ENCODE measurements at regions of chr6 and their contacts with region 1.

Region 1: DNA sequence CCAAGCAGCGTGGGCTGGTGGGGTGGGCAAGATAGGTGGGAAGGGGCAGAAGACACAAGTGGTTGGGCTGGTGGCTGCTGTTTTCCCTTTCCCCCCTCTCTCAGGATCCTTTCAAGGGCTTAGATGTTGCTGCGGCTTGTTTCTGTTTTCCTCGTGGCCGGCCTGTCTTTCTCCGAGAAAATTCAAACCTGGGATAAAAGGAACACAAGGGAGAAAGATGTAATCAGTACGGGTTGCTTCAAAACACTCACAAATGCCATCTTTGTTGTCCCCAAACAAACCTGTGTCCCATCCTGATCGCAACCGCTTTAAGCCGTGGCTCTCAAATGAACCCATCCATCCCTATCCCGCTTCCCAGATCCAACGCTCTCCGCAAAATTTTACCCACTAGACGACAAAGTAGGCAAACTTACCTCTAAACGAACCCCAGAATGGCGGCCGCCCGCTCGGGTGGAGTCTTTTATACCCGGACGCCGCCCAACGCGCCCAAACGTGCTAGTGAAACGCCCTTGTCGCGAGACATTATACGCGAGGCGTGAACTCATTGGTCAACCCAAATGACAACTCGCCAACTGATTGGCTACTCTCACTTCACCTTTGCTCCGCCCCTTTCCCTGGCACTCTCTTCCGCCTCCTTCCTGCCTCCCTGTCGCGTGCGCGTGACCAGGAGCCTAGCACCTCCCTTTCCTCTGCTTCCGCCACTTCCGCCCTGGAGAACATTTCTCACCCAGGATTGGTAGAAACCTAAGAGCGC is at the start of gene PPP1R10:
- DNase-seq: peak; percentile 100
- H3K4me3 Mint-ChIP-seq: peak within 1 kb of the TSS; percentile 83
- H3K27ac Mint-ChIP-seq: peak within 1 kb of the TSS; percentile 99
- H3K4me1 Mint-ChIP-seq: peaks cover 26% of the 10 kb centered on the region
- H3K27me3 Mint-ChIP-seq: no peaks in the 10 kb centered on the region
- CTCF ChIP-seq: no peak
- total RNA-seq, gene PPP1R10: 103 and 209 TPM in 2 replicates

Region 2: GRCh38 chr6:30396833-30397479 is 220.0 kb before region 1 on chr6:
- CTCF ChIA-PET with region 1: no interaction called
- POLR2A ChIA-PET with region 1: no interaction called
- intact Hi-C with region 1: no loop called
- DNase-seq: peak; percentile 74
- H3K4me3 Mint-ChIP-seq: no peak overlapping the region
- H3K27ac Mint-ChIP-seq: no peak overlapping the region
- H3K4me1 Mint-ChIP-seq: no peaks in the 10 kb centered on the region
- H3K27me3 Mint-ChIP-seq: peaks cover 34% of the 10 kb centered on the region
- CTCF ChIP-seq: peak; percentile 61

Region 3: DNA sequence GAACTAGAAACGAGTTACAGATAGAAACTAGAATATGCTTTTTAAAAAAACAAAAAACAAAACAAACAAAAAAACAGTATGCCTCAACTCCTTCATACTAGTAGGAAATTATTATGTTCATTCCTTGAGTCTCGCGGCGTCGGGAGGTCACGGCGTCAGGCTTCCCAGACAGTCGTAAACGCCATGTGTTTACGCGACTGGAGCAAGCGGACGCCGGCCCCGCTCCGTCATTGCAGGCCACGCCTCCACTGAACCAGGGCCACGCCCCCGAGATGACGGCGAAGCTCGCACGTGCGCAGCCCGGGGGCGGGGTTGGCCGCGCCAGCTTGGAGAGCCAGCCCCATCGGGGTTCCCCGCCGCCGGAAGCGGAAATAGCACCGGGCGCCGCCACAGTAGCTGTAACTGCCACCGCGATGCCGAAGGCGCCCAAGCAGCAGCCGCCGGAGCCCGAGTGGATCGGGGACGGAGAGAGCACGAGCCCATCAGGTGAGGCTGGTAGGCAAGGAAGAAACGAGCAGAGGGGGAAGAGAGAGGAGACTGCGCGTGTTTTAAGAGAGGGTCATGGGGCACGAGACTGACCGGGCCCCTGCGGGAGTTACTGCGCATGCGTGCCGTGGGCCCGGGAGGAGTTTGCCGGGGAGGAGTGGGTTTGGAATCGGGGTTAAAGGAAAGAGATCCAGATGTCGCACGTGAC is 45.8 kb before region 1 on chr6 and contains the start of gene ABCF1:
- CTCF ChIA-PET with region 1: no interaction called
- POLR2A ChIA-PET with region 1: interaction called, 28 read pairs
- intact Hi-C with region 1: no loop called
- DNase-seq: peak; percentile 95
- H3K4me3 Mint-ChIP-seq: peak within 1 kb of the TSS; percentile 92
- H3K27ac Mint-ChIP-seq: peak within 1 kb of the TSS; percentile 99
- H3K4me1 Mint-ChIP-seq: peaks cover 43% of the 10 kb centered on the region
- H3K27me3 Mint-ChIP-seq: no peaks in the 10 kb centered on the region
- CTCF ChIP-seq: no peak
- total RNA-seq, gene ABCF1: 58.0 and 63.9 TPM in 2 replicates

Region 4: GRCh38 chr6:30640476-30640875 is 23.5 kb after region 1 on chr6:
- CTCF ChIA-PET with region 1: interaction called, 4 read pairs
- POLR2A ChIA-PET with region 1: interaction called, 38 read pairs
- intact Hi-C with region 1: no loop called
- DNase-seq: peak; percentile 9
- H3K4me3 Mint-ChIP-seq: no peak overlapping the region
- H3K27ac Mint-ChIP-seq: no peak overlapping the region
- H3K4me1 Mint-ChIP-seq: peaks cover 1% of the 10 kb centered on the region
- H3K27me3 Mint-ChIP-seq: no peaks in the 10 kb centered on the region
- CTCF ChIP-seq: no peak

Region 5: GRCh38 chr6:30678964-30679726 is 62.2 kb after region 1 on chr6:
- CTCF ChIA-PET with region 1: interaction called, 3 read pairs
- POLR2A ChIA-PET with region 1: interaction called, 11 read pairs
- intact Hi-C with region 1: no loop called
- DNase-seq: peak; percentile 82
- H3K4me3 Mint-ChIP-seq: peak overlapping the region; percentile 41
- H3K27ac Mint-ChIP-seq: no peak overlapping the region
- H3K4me1 Mint-ChIP-seq: peaks cover 28% of the 10 kb centered on the region
- H3K27me3 Mint-ChIP-seq: no peaks in the 10 kb centered on the region
- CTCF ChIP-seq: peak; percentile 98

Region 6: DNA sequence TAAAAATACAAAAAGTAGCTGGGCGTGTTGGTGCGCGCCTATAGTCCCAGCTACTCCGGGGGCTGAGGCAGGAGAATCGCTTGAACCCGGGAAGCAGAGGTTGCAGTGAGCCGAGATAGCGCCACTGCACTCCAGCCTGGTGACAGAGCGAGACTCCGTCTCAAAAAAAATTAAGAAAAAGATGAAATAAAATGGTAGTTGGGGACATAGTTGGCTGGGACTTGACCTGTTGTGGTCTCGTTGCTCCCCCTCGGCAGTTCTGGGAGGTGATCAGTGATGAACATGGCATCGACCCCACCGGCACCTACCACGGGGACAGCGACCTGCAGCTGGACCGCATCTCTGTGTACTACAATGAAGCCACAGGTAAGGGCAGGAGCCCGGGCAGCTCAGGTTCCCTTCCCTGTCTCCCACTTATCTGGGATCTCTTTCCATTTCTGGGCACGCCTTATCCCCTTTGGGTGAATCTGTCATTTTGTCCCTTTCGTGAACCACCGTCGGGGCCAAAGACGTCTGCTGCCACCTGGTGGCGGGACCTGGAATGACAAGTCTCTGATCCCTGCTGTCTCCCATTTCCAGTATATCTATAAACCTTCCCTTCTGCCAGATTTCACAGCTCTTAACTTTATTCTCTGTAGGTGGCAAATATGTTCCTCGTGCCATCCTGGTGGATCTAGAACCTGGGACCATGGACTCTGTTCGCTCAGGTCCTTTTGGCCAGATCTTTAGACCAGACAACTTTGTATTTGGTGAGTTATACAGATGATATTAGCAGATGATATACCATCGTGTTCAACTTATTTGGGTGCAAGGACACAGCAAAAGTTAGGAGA is 105.5 kb after region 1 on chr6:
- CTCF ChIA-PET with region 1: interaction called, 14 read pairs
- POLR2A ChIA-PET with region 1: interaction called, 88 read pairs
- intact Hi-C with region 1: loop called (anchors 2 kb)
- DNase-seq: peak; percentile 86
- H3K4me3 Mint-ChIP-seq: peak overlapping the region; percentile 86
- H3K27ac Mint-ChIP-seq: no peak overlapping the region
- H3K4me1 Mint-ChIP-seq: peaks cover 45% of the 10 kb centered on the region
- H3K27me3 Mint-ChIP-seq: no peaks in the 10 kb centered on the region
- CTCF ChIP-seq: peak; percentile 97